ENCODE measurements at regions of chrX and their contacts with region 1.

Region 1: DNA sequence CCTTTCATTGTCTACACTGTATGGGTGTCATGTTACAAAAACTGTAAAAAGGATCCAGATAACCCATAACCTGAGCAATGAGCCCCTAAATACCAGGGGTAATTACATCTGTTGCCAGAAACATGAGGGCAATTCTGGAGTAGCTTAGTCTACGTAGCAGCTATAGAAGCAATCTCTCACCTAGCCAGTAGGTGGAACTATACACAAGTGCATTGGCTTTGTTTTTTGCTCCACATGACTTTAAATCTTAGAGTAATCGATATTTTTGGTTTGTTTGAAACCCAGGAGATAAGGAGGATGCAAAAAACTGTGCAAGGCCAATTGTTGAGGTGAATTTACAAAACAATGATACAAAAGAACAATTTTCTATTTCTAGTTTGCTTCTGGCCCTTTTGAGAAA is 57.5 kb downstream of the GPR82 start:
- DNase-seq: no peak
- ATAC-seq: peak; percentile 93
- H3K4me3 ChIP-seq: no peak overlapping the region
- H3K27ac ChIP-seq: no peak overlapping the region
- H3K4me1 ChIP-seq: no peaks in the 10 kb centered on the region
- H3K27me3 ChIP-seq: no peaks in the 10 kb centered on the region
- CTCF ChIP-seq: peak; percentile 67 to 80 (median 71)
- EP300 ChIP-seq: no peak
- POLR2A ChIP-seq: no peak
- RAD21 ChIP-seq: peak; percentile 80

Region 2: GRCh38 chrX:41895826-41896225 is 114.3 kb after region 1 on chrX:
- CTCF ChIA-PET with region 1: no interaction called
- POLR2A ChIA-PET with region 1: no interaction called
- RAD21 ChIA-PET with region 1: no interaction called
- SMC1A ChIA-PET with region 1: no interaction called
- in situ Hi-C with region 1: no loop called
- intact Hi-C with region 1: no loop called
- DNase-seq: no peak
- ATAC-seq: peak; percentile 32; the same call in 2 of the 3 replicates
- H3K4me3 ChIP-seq: no peak overlapping the region
- H3K27ac ChIP-seq: no peak overlapping the region
- H3K4me1 ChIP-seq: no peaks in the 10 kb centered on the region
- H3K27me3 ChIP-seq: no peaks in the 10 kb centered on the region
- CTCF ChIP-seq: no peak
- EP300 ChIP-seq: no peak
- POLR2A ChIP-seq: no peak
- RAD21 ChIP-seq: no peak

Region 3: DNA sequence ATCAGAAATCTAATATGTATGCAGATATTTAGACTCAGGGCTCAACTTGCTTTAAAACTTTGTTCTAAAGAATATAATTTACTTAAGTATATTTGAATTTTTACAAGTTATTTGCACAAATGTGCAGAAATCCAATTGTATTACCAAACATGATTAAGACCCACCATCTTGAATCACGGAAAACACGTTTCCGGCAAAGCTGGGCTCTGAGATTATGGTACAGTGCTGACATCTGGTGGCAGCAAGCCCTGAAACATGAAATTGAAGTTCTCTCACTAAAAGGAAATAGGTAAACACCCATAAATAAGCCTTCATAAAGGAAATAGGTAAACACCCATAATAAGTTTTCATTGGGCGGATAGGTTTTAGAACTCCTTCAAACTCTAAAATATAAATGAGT is 1776.3 kb after region 1 on chrX:
- CTCF ChIA-PET with region 1: interaction called, 7 read pairs
- POLR2A ChIA-PET with region 1: no interaction called
- RAD21 ChIA-PET with region 1: interaction called, 4 read pairs
- SMC1A ChIA-PET with region 1: interaction called, 4 read pairs
- in situ Hi-C with region 1: no loop called
- intact Hi-C with region 1: loop called (anchors 2 kb)
- DNase-seq: peak; percentile 23
- ATAC-seq: peak; percentile 78
- H3K4me3 ChIP-seq: no peak overlapping the region
- H3K27ac ChIP-seq: no peak overlapping the region
- H3K4me1 ChIP-seq: no peaks in the 10 kb centered on the region
- H3K27me3 ChIP-seq: no peaks in the 10 kb centered on the region
- CTCF ChIP-seq: peak; percentile 60 to 83 (median 75); a peak in 5 of 6 replicates
- EP300 ChIP-seq: no peak
- POLR2A ChIP-seq: no peak
- RAD21 ChIP-seq: peak; percentile 90

Measured in GM12878 (cell line).